Cardiac septum (tissue), 1 donor: ENCODE measurements at regions of chr3 and their contacts with region 1.

Region 1: DNA sequence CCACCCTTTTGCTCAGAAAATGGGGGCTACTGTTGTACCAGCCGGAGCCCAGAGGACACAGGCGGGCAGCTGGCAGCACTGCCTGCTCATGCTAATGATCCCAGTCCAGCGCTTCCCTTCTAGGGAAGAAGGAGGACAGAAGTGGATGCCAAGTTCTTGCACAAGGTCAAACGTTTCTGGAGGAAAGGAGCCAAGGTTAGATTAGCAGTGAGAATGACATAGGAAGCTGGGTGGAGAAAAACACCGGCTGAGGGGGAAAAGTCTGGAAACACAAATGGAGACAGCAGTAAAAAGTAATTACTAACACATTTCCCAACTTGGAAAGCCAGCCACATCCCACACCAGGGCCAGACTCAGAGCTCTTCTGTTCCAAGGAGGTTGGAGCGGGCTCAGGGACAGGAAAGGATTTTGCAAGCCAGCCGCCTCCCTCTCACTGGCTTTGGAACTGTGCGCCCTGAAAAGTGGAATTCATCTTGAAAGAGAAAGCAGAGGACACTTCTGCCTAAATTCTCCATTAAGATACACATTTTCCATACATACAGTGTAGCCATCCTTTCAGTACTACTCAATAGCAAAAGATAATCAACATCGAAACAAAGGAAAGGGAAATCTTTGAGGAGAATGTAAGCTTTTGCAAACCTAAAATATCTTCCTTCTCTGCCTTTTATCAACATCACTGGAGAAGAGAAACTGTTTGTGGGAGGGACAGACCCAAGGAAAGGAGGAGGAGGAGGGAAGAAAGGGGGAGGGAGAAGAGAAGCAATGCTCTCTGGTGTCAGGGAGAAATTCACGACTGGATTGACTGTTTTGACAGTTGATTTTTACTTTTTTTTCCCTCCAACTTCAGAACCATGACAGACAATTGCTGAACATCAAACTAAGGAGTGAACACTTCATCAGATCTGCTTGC is 133.6 kb downstream of the CD47 start:
- DNase-seq: peak; percentile 82

Region 2: GRCh38 chr3:107987036-107987947 is 30.0 kb after region 1 on chr3:
- intact Hi-C with region 1: loop called (anchors 2 kb)
- DNase-seq: peak; percentile 78

Region 3: DNA sequence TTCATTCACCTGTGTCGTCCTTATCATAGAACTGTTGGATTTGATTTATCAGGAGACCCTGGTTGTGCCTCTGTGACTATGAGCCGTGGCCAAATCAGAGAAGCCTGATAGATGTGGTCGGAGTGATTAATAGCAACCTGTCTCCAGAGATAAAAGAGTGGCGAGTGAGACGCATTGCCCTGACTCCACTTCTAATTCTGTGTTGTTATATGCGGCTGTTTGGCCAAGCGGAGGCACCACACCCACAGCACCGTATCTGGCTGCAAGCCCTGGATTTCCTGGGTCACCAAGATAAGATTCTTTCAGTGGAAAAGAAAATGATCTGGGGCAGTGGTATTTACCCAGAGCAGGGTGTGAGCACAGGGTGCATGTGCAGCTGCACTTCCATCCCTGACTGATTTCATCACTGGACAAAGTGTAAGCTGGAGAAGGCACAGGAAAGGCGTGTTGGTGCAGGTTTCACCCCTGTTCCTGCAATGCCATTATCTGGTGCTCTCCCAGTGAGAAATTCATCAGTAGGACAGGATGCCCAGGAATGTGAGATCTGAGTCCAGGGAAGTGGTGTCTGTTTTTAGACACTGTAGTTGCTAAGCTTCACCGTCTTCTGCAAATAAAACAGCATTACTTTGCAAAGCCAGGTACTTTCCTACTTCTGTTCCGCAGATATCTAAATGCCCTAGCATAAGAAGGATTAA is 49.0 kb after region 1 on chr3:
- intact Hi-C with region 1: loop called (anchors 5 kb)
- DNase-seq: no peak

Region 4: DNA sequence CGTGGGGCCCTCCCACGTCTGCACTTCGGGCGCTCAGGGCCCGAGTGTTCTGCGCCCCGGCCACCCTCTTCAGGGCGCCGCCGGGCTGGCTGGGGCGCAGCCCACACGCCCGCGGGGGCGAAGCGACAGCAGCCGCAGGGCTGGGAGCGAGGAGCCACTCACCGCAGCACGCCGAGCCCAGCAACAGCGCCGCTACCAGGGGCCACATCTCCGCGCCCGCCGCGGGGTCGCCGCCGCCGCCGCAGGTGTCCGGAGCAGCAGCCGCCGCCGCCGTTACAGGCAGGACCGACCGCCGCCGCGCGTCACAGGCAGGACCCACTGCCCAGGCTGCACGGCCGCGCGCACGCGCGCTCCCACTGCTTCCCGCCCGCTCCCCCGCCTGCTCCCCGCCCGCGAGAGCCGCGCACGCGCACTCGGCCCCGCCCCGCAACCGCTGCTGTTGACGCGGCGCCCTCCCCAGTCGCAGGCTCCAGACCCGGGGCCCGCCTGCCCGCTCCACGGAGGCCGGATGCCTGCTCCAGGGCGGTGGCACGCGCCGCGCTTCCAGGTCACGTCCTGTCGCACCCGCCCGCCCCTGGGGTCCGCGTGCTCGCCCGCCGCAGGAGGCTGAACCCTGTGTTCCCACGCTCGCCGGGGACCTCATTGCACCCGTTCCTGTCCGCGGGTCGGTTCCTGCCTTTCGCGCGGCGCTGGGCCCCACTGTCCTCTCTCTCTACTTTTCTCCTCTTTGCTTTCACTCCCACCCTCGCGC is 133.6 kb after region 1 on chr3 and contains the start of gene CD47:
- intact Hi-C with region 1: loop called (anchors 5 kb)
- DNase-seq: peak; percentile 98
- total RNA-seq, gene CD47: 51.4 TPM

Region 5: DNA sequence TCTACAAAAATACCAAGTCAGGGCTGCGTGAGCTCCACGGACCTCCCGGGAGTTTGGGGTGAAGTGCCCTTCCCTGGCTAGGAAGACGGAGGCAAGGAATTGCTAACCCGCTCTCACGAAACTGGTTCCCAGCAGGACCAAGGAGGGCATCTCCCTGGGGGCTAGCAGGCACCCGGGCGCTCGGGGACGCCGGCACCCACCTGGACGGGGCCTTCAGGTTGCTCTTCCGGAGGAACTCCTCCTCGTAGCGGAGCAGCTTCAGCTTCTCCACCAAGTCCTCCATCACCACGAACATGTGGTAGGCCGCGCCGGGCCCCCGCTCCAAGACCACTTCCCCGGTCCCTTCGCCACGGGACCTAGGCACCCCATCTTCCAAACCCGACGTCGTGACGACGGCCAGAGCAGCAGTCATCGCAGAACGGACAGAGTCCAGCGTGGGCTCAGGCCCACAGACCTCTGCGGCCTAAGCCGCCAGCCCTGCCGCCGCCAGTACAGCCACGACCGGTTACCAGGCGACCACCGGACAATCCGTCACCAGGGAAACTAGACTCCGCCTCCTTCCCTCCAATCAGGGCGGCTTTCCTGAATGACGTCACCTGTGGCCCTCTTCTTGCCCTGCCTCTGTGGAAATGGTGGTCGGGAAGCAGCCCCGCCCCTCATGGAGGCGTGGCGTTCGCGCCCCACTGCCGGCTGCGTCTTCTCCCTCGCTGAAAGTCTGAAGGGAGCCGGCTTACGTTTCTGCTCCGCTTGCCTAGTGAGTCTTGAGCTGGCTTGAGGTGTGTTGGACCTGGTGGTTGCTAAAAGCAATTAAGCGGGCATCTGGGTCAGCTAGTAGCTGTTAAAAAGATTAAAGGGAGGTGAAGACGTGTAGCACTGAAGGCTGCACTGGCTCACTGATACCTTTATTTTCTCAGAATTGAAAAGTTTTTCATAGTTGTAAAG is 264.9 kb after region 1 on chr3 and contains the start of gene IFT57:
- intact Hi-C with region 1: loop called (anchors 10 kb)
- DNase-seq: peak; percentile 97
- total RNA-seq, gene IFT57: 23.1 TPM